GM10248 (cell line): ENCODE measurements at regions of chr1 and their contacts with region 1.

Region 1: GRCh38 chr1:27300341-27301051 is 21.5 kb upstream of the TMEM222 start:
- DNase-seq: peak; percentile 90
- CTCF ChIP-seq: peak; percentile 99

Region 2: DNA sequence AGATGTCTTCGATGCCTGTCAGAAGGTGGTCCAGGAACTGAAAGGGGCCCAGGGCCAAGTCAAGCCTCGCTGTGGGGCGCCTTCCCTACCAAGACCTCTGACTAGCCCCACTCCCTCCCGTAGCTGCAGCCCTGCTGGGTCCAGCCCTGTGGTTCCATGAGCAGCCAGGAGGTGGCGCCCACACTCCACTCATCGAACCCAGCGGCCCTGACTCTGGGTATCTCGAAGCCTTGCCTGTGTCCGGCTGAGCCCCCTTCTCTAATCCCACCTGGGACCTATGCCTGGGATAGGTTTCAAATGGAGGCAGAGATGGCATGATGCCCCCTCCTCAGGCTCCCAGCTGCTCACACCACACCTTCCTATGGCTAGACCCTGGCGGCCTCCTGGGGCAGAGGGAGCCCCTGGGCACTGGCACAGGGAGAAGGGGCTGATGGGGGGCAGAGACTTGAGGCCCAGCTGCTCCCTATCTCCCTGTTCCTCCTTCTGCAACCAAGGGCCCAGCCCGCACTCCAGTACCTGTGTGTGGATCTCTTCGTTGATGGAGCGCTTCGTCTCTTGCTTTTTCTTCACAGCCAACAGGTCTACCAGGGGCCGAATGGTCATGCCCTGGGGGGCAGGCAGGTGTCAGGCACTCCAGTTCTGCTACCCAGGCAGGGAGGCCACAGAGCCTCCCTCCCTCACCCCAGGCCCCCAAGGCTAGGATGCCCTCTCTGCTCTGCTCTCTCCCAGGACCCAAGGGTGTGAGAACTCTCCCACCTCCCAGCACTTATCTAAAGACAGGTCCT is 197.6 kb before region 1 on chr1:
- CTCF ChIA-PET with region 1: interaction called, 98 read pairs
- POLR2A ChIA-PET with region 1: no interaction called
- DNase-seq: peak; percentile 87
- CTCF ChIP-seq: peak; percentile 99

Region 3: DNA sequence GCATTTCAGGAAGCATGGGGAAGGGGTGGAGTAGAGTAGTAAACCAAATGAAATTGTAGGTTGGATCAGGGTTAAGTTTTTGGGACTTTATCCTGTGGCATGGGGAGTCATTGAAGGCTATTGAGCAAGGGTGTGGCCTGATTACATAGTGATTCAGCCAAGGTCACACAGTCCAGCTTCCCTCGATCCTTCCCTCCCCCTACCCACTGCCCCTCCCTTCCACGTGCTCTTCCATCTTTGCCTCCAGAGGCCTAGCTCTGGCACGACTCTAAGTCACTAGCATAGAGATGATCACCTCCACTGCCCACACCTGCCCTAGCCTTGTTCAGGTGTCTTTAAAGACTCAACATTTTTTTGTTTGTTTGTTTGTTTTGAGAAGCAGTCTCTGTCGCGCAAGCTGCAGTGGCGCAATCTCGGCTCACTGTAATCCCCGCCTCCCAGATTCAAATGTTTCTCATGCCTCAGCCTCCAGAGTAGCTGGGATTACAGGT is 108.4 kb before region 1 on chr1:
- CTCF ChIA-PET with region 1: interaction called, 10 read pairs
- POLR2A ChIA-PET with region 1: no interaction called
- DNase-seq: no peak
- CTCF ChIP-seq: no peak

Region 4: DNA sequence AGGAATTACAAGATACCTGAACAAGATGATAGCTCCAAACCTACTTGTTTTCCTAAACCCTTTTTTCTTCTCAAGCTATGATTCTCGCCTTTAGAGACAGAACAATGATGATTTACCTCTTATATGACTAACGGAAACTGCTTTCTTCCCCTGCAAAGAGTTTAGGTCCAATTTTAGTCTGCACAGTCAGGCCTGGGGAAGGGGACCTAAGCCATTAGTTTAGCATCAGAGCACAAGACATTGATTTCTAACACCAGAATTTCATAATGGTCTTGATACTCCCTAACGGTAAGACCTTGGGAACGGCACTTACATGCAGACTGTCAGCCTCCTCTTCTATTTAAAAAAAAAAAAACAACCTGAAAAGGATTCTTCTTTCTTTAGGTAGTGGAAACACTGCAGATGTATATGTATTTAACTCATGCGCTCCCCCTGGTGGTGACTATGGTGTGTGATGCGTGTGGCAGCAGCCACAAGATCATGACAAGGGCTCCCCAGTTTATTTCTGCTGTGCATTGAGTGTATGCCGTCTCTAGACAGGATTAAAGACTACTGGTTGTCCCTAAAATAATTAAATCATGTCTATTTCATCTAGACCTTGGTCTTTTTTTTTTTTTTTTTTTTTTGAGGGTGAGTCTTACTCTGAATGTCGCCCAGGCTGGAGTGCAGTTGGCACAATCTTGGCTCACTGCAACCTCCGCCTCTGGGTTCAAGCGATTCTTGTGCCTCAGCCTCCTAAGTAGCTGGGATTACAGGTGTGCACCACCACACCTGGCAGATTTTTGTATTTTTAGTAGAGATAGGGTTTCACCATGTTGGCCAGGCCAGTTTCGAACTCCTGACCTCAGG is 15.8 kb before region 1 on chr1:
- CTCF ChIA-PET with region 1: interaction called, 154 read pairs
- POLR2A ChIA-PET with region 1: no interaction called
- DNase-seq: peak; percentile 88
- CTCF ChIP-seq: peak; percentile 87

Region 5: GRCh38 chr1:27332536-27333281 is 32.2 kb after region 1 on chr1:
- CTCF ChIA-PET with region 1: interaction called, 57 read pairs
- POLR2A ChIA-PET with region 1: no interaction called
- DNase-seq: peak; percentile 77
- CTCF ChIP-seq: peak; percentile 81

Region 6: GRCh38 chr1:27365372-27366112 is 65.0 kb after region 1 on chr1:
- CTCF ChIA-PET with region 1: interaction called, 19 read pairs
- POLR2A ChIA-PET with region 1: no interaction called
- DNase-seq: peak; percentile 94
- CTCF ChIP-seq: no peak

Region 7: DNA sequence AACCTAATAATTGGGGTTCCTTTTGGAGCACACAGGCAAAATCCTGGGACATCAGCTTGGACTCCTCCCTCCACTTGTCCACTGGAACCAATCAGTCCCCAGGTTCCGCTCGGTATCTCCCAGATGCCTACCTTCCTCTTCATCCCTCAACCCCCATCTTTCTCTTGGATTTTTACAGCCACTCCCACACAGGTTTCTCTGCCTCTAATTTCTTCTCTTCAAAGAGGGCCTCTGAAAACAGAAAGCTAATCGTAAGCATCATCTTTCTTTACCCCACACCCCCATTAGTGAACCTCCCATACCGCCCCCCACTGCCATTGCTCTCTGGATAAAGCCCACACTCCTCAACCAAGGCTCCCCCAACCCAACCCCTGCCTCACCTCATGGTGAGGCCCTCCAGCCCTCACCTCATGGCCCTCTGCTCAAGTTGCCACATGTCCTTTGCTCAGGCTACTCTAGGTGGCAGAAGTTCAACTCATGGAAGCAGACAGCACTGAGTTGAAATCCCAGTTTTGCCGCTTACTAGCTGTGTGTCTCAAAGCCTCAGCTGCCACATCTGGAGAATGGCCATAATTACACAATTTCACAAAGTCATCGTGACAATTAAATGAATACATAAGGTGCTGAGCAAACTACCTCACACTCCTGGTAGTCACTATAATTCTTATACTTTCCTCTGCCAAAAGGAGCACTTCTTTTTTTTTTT is 207.6 kb after region 1 on chr1:
- CTCF ChIA-PET with region 1: no interaction called
- POLR2A ChIA-PET with region 1: no interaction called
- DNase-seq: no peak
- CTCF ChIP-seq: no peak

Region 8: DNA sequence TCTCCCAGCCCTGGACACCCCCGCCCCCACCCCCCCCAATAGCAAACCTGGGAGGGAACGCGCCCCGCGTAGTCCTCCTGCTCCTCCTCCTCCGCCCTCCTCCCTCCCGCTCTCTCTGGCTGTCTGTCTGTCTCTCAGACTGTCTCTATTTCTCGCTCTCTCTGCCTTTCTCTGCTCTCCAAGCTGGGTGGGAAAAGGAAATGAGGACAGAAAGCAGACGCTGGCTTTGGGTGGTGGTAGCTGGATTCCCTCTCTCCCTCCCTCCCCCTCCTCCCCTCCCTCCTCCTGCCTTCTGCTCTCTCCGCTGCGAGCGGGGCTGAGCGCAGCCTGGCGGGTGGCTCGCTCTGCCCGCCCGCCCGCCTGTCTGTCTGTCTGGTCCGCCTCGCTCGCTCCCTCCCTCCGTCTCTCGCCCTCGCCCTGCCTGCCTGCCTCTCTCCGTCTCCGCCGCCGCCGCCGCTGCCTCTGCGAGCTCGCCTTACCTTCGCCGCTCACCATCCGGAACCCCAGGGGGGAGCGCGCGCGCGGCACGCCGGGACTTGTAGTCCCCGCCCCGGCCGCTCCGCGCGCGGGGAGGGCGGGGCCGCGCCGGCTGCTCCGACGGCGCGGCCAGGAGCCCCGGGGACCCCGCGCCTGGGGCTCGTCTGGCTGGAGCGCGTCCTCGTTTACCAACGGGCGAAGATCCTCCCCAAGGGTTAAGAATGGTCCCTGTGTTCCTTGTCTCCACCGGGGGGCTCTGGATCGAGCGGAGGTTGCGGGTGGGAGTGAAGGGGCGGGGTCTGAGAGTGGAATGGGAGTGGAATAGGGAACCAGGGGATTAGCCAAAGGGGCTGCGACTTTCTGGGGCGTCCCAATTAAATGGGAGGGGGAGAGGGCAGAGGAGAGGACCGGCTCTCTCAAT is 303.4 kb after region 1 on chr1 and contains the start of gene AHDC1:
- CTCF ChIA-PET with region 1: interaction called, 85 read pairs
- POLR2A ChIA-PET with region 1: no interaction called
- DNase-seq: peak; percentile 93
- CTCF ChIP-seq: no peak